Gastrocnemius medialis (tissue), 4 donors: ENCODE measurements at regions of chr1 and their contacts with region 1.

Region 1: DNA sequence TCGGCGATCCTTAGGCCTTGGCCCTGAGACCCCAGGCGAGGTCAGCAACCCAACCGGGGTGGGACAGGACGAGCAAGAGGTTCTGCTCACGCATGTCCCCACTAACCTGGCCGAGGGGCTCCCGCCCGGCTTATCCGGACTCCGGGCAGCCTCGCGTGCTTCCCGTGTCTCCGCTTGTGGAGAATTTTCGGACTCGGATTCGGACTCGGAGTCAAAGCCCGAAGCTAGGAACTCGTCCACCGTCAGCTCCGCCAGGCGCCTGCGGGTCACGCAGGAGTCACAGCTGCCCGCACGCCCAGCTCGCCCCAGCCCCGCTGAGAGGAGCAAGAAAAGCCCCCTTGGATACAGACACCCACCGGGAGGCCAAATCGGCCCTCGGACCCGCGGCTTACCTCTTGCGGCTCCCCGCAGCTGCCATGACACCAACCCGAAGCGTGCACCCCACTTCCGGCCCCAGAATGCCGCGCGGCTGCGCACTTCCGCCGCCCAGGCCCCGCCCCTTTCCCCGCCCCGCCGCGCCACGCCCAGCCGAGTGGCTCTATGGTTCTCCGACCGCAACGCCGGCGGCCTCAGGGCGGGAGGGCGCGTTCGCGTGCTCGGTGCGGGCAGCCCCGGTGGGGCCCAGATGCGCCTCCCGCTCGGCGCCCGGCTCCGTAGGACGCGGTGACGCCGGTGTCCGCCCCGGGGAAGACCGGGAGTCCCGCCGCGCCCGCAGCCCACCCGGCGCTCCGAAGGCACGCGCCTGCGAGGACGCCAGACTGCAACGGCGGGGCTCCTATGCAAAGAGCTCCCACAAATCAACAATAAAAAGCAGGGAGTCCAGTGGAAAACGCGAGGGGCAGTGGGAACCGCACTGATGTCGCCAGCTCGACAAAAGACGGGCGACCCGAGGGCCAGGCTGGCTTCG is at the start of gene NOC2L:
- DNase-seq: peak; percentile 86 to 90
- ATAC-seq: peak; percentile 85 to 87
- H3K4me3 ChIP-seq: peak within 1 kb of the TSS; percentile 83 to 94 (median 92)
- H3K27ac ChIP-seq: peak within 1 kb of the TSS; percentile 69 to 86 (median 78)
- H3K4me1 ChIP-seq: peaks cover 13 to 24% of the 10 kb centered on the region in 2 donors
- H3K27me3 ChIP-seq: no peaks in the 10 kb centered on the region
- CTCF ChIP-seq: no peak
- POLR2A ChIP-seq: peak; percentile 33 to 69
- total RNA-seq, gene NOC2L: 47.4 to 115 (median 74.2) TPM

Region 2: GRCh38 chr1:886760-887159 is 72.3 kb before region 1 on chr1:
- in situ Hi-C with region 1: no loop called
- intact Hi-C with region 1: no loop called
- DNase-seq: no peak
- ATAC-seq: no peak
- H3K4me3 ChIP-seq: no peak overlapping the region
- H3K27ac ChIP-seq: no peak overlapping the region
- H3K4me1 ChIP-seq: no peaks in the 10 kb centered on the region
- H3K27me3 ChIP-seq: peaks cover 0 to 16% (median 6%) of the 10 kb centered on the region in 3 donors
- CTCF ChIP-seq: no peak
- POLR2A ChIP-seq: no peak

Region 3: DNA sequence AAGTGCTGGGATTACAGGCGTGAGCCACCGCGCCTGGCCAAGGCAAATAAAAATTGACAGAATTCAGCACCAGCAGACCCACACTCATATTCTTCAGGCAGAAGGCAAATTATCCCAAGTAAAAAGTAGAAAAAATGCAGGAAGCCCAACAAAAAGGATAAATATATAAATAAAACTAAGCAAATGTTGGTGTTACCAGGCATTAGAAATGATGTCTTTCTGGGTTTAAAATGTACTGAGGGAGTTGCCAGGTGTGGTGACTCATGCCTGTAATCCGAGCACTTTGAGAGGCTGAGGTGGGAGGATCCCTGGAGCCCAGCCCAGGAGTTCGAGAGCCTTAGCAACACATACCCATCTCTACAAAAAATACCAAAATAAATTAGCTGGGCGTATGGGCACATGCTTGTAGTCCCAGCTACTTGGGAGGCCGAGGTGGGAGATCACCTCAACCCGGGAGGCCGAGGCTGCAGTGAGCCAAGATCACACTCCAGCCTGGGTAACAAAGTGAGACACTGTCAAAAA is 359.1 kb after region 1 on chr1:
- in situ Hi-C with region 1: no loop called
- intact Hi-C with region 1: loop called (anchors 10 kb)
- DNase-seq: peak; percentile 83 to 93
- ATAC-seq: peak; percentile 96 to 97
- H3K4me3 ChIP-seq: no peak overlapping the region
- H3K27ac ChIP-seq: peak overlapping the region; percentile 74 to 91 (median 86)
- H3K4me1 ChIP-seq: peaks cover 38 to 45% of the 10 kb centered on the region in 2 donors
- H3K27me3 ChIP-seq: no peaks in the 10 kb centered on the region
- CTCF ChIP-seq: no peak
- POLR2A ChIP-seq: no peak

Region 4: DNA sequence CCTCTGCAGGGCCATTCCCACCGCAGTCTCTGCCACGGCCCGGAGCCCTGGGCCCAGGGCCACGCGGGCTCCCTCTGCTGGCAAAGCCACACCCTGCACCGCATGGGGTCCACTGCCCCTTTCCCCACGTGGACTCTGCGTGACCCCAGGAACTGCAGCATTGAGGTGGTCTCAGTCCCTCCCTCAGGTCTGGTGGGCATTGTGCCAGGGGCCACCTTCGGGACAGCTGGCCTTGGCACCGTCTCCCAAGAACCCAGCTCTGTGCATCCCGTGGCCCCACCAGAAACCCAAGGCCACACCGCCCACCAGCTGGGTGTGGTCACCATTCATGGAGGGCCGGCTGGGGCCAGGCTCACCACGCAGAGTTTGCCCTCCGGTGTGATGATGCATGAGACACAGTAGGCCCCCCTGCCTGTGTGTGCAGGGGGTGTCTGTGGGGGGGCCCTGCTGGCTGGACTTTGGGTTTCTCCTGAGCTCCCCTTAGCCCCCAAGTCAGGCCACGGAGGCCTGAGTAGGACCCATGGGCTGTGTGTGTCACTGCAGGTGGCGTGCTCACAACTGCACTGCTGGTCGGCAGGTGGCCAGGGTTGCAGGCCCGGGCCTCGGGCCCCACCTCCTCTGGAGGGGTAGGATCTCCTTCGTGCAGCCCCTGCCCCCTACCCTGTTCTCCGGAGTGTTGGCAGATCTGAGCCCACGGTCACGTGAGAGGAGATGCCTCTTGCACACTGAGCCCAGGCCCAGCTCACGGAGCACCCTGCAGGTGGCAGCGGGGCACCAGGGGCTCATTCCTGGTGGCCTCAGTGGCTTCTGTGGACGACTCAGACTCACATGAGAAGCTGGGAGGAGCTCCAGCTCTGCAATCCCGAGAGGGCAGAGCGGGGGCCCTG is 482.2 kb after region 1 on chr1:
- in situ Hi-C with region 1: no loop called
- intact Hi-C with region 1: no loop called
- DNase-seq: peak in 1 of 2 donors; percentile 36
- ATAC-seq: peak in 1 of 2 donors; percentile 78
- H3K4me3 ChIP-seq: no peak overlapping the region
- H3K27ac ChIP-seq: no peak overlapping the region
- H3K4me1 ChIP-seq: peaks cover 3 to 19% of the 10 kb centered on the region in 2 donors
- H3K27me3 ChIP-seq: peaks cover 0 to 20% (median 7%) of the 10 kb centered on the region in 3 donors
- CTCF ChIP-seq: peak; percentile 80 to 96 (median 91)
- POLR2A ChIP-seq: no peak